Activated T-helper 2 cell treated with anti-CD3 and anti-CD28 coated beads, Interferon-gamma antibody, Interleukin-2, Interleukin-4, amounts not matched to agents 10 μg/mL and 5 μg/mL and 100 μg/mL, durations not matched to agents 14 hours and 24 hours and 36 hours (primary cell): ENCODE measurements at regions of chr10 and their contacts with region 1.

Region 1: GRCh38 chr10:30980951-30981616 is 50.6 kb downstream of the ZNF438 start:
- DNase-seq: no peak
- H3K4me3 Mint-ChIP-seq: no peak overlapping the region
- H3K27ac Mint-ChIP-seq: no peak overlapping the region
- H3K4me1 Mint-ChIP-seq: peaks cover 15% of the 10 kb centered on the region
- H3K27me3 Mint-ChIP-seq: no peaks in the 10 kb centered on the region

Region 2: GRCh38 chr10:30392564-30392990 is 588.5 kb before region 1 on chr10:
- intact Hi-C with region 1: no loop called
- DNase-seq: peak; percentile 68
- H3K4me3 Mint-ChIP-seq: no peak overlapping the region
- H3K27ac Mint-ChIP-seq: no peak overlapping the region
- H3K4me1 Mint-ChIP-seq: peaks cover 14% of the 10 kb centered on the region
- H3K27me3 Mint-ChIP-seq: peaks cover 22% of the 10 kb centered on the region

Region 3: GRCh38 chr10:31090894-31091607 is 110.0 kb after region 1 on chr10:
- intact Hi-C with region 1: loop called (anchors 10 kb)
- DNase-seq: peak; percentile 46
- H3K4me3 Mint-ChIP-seq: no peak overlapping the region
- H3K27ac Mint-ChIP-seq: peak overlapping the region; percentile 82
- H3K4me1 Mint-ChIP-seq: peaks cover 31% of the 10 kb centered on the region
- H3K27me3 Mint-ChIP-seq: no peaks in the 10 kb centered on the region